ENCODE measurements at regions of chr17 and their contacts with region 1.

Region 1: DNA sequence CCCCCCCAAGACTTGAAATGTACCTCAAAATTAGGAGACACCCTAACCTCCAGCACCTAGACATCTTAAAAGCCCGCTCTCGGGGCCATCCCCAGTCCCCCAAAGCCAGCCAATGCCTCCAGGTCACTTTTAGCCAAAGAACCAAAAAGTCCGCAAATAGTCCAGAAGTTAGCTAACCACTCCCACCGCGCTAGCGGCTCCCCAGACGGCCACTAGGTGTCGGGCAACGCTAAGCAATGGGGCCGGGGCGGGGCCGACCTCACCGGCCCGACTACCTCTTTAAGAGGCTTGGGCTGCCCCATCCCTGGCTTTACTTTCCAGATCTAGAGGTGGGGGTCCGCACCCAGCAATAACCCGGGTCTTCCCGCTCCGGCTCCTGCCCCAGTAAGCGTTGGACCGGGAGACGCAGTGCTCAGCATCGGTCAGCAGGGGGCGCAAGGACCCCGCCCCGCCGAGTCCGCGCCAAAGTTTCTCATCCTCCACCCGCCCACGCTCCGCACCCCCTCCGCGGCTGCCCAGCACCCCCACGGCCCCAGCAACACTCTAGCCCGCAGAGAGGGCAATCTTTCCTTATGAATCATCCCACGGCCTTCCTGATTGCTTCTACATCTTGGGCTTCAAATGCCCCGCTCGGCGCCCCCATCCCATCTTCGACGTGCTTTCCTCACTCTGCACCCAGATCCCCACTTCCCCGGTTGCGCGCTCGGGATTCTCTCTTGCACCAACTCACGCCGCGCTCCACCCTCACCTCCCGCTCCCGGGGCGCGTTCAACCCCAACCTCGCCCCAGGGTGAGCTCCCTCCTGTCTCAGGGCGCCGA is 765 bp downstream of the COL1A1 start:
- DNase-seq: peak; percentile 92
- H3K4me3 ChIP-seq: peak overlapping the region; percentile 49
- H3K27ac ChIP-seq: no peak overlapping the region
- H3K4me1 ChIP-seq: peaks cover 27% of the 10 kb centered on the region
- H3K27me3 ChIP-seq: peaks cover 19% of the 10 kb centered on the region
- CTCF ChIP-seq: peak; percentile 100

Region 2: GRCh38 chr17:49239963-49240362 is 960.7 kb before region 1 on chr17:
- CTCF ChIA-PET with region 1: no interaction called
- POLR2A ChIA-PET with region 1: no interaction called
- intact Hi-C with region 1: no loop called
- DNase-seq: no peak
- H3K4me3 ChIP-seq: no peak overlapping the region
- H3K27ac ChIP-seq: no peak overlapping the region
- H3K4me1 ChIP-seq: no peaks in the 10 kb centered on the region
- H3K27me3 ChIP-seq: no peaks in the 10 kb centered on the region
- CTCF ChIP-seq: no peak

Region 3: GRCh38 chr17:50169121-50169764 is 31.4 kb before region 1 on chr17:
- CTCF ChIA-PET with region 1: interaction called, 22 read pairs
- POLR2A ChIA-PET with region 1: no interaction called
- intact Hi-C with region 1: loop called (anchors 1 kb)
- DNase-seq: peak; percentile 79
- H3K4me3 ChIP-seq: no peak overlapping the region
- H3K27ac ChIP-seq: no peak overlapping the region
- H3K4me1 ChIP-seq: no peaks in the 10 kb centered on the region
- H3K27me3 ChIP-seq: no peaks in the 10 kb centered on the region
- CTCF ChIP-seq: peak; percentile 87

Region 4: DNA sequence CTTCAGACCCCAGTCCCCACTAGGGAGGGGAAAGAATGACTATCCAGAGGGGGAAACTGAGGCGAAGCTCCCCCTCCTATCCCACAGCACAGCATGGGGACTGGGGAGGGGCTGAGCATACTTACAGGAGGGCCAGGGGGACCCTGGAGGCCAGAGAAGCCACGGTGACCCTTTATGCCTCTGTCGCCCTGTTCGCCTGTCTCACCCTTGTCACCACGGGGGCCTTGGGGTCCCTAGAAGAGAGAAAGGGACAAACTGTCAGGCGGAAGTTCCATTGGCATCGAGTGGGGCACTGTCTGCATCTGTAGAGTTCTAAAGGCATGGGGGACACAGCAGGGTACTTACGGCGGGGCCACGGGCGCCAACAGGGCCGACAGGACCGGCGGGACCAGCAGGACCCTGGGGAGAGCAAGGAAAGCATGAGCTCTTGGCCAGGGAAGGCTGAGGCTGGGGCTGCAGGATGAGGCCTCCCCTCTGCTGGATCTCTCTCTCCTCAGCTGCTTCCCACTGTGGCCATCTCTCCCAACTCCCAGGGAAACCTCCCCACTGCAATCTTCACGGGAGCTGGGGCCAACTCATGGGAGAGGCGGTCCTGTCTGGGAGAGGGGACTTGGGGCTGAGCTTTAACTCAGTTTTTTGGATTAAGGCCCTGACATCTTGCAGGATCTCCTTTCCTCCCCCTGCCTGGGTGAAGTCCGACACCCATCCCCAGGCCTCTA is 12.8 kb before region 1 on chr17:
- CTCF ChIA-PET with region 1: no interaction called
- POLR2A ChIA-PET with region 1: interaction called, 24 read pairs
- intact Hi-C with region 1: no loop called
- DNase-seq: no peak
- H3K4me3 ChIP-seq: no peak overlapping the region
- H3K27ac ChIP-seq: no peak overlapping the region
- H3K4me1 ChIP-seq: no peaks in the 10 kb centered on the region
- H3K27me3 ChIP-seq: no peaks in the 10 kb centered on the region
- CTCF ChIP-seq: no peak

Region 5: GRCh38 chr17:50213026-50214022 is 12.7 kb after region 1 on chr17:
- CTCF ChIA-PET with region 1: interaction called, 25 read pairs
- POLR2A ChIA-PET with region 1: interaction called, 3 read pairs
- intact Hi-C with region 1: no loop called
- DNase-seq: peak; percentile 49
- H3K4me3 ChIP-seq: no peak overlapping the region
- H3K27ac ChIP-seq: no peak overlapping the region
- H3K4me1 ChIP-seq: peaks cover 23% of the 10 kb centered on the region
- H3K27me3 ChIP-seq: no peaks in the 10 kb centered on the region
- CTCF ChIP-seq: peak; percentile 39

Region 6: DNA sequence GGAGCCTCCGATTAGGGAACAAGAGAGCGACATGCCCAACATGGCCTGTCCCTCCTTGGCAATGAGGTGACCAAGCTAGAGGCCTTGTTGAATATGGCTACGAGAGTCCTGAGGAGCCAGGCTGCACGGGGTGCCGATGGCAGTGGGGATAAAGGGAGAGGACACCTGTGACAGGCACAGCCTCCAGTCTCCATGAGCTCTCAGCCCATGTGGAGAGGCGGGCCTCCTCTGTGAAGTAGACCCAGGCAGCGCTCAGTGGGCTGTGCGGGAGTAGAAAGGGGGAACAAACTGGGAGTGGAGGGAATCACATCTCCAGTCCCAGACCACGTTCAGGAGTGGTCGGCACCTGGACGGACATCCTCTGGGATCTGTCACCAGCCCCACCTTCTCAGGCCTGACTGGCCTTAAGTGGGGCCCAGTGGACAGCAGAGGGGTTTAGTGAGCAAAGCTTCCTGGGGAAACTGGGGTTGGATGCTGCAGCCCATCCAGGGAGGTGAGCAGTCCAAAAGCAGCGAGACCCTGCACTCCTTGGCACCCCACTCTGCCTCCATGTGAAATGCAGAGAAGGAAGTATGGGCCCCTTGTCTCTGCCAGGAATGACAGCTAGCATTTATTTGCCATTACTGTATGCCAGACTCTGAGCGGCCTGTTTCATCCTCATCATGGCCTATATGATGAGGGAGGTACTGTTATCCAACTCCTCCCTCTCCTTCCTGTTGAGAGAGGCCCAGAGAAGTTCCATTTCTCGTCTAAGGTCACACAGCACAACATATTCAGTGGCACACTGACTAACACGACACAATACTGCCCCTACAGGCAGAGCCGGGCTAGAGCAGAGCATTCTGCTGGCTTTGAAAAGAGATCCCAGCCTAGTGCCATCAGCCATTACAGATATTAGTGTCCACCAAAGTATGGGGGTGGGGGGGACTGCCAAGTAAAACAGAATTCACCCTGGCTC is 69.1 kb after region 1 on chr17:
- CTCF ChIA-PET with region 1: interaction called, 23 read pairs
- POLR2A ChIA-PET with region 1: no interaction called
- intact Hi-C with region 1: loop called (anchors 1 kb)
- DNase-seq: peak; percentile 74
- H3K4me3 ChIP-seq: no peak overlapping the region
- H3K27ac ChIP-seq: no peak overlapping the region
- H3K4me1 ChIP-seq: peaks cover 10% of the 10 kb centered on the region
- H3K27me3 ChIP-seq: no peaks in the 10 kb centered on the region
- CTCF ChIP-seq: peak; percentile 86